Mammary epithelial cell (primary cell): ENCODE measurements at regions of chr4 and their contacts with region 1.

Region 1: DNA sequence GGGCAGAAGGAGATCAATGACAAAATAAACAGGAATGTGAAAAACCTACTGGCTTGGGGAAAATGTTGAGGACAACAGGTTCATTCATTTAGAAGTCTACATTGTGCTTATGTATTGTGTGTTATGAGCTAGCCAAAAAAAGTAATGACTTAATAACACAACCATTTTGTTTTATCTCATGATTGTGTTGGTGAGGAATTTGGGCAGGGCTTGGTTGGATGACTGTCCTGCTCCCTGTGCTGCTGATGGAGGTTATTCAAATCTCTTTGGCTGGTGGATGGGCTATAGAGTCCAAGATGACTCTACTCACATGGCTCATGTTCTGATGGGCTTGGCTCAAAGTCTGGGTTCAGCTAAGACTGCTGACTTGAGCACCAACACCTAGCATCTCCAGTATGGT is 116.3 kb downstream of the HS3ST1 start:
- DNase-seq: peak; percentile 81
- H3K4me3 ChIP-seq: no peak overlapping the region
- H3K27ac ChIP-seq: peak overlapping the region; percentile 51
- H3K4me1 ChIP-seq: peaks cover 27% of the 10 kb centered on the region
- H3K27me3 ChIP-seq: no peaks in the 10 kb centered on the region
- CTCF ChIP-seq: no peak

Region 2: GRCh38 chr4:10063544-10064300 is 1248.7 kb before region 1 on chr4:
- CTCF ChIA-PET with region 1: no interaction called
- dilution Hi-C with region 1: no loop called
- in situ Hi-C with region 1: no loop called
- intact Hi-C with region 1: no loop called
- DNase-seq: peak; percentile 70
- H3K4me3 ChIP-seq: no peak overlapping the region
- H3K27ac ChIP-seq: no peak overlapping the region
- H3K4me1 ChIP-seq: peaks cover 9% of the 10 kb centered on the region
- H3K27me3 ChIP-seq: no peaks in the 10 kb centered on the region
- CTCF ChIP-seq: peak; percentile 95

Region 3: GRCh38 chr4:10866666-10867065 is 445.7 kb before region 1 on chr4:
- CTCF ChIA-PET with region 1: interaction called, 17 read pairs
- dilution Hi-C with region 1: no loop called
- in situ Hi-C with region 1: no loop called
- intact Hi-C with region 1: no loop called
- DNase-seq: no peak
- H3K4me3 ChIP-seq: no peak overlapping the region
- H3K27ac ChIP-seq: no peak overlapping the region
- H3K4me1 ChIP-seq: no peaks in the 10 kb centered on the region
- H3K27me3 ChIP-seq: no peaks in the 10 kb centered on the region
- CTCF ChIP-seq: no peak

Region 4: GRCh38 chr4:11281720-11282119 is 30.7 kb before region 1 on chr4:
- CTCF ChIA-PET with region 1: no interaction called
- dilution Hi-C with region 1: no loop called
- in situ Hi-C with region 1: no loop called
- intact Hi-C with region 1: no loop called
- DNase-seq: peak; percentile 24
- H3K4me3 ChIP-seq: no peak overlapping the region
- H3K27ac ChIP-seq: no peak overlapping the region
- H3K4me1 ChIP-seq: peaks cover 7% of the 10 kb centered on the region
- H3K27me3 ChIP-seq: no peaks in the 10 kb centered on the region
- CTCF ChIP-seq: no peak

Region 5: DNA sequence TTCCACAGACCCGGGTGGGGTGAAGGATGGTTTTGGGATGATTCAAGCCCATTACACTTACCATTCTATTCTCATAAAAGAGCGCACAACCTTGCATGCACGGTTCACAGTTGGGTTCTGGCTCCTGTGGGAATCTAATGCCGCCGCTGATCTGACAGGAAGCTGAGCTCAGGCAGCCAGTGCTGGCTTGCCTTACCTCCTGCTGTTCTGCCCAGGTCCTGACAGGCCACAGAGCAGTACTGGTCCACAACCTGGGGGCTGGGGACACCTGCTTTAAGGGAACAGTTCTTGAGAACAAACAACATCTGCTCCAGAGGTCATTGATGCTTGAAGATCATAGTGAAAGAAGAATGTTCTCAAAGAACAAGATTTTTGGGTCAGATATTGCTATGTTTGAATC is 124.3 kb after region 1 on chr4:
- CTCF ChIA-PET with region 1: no interaction called
- dilution Hi-C with region 1: no loop called
- in situ Hi-C with region 1: no loop called
- intact Hi-C with region 1: no loop called
- DNase-seq: peak; percentile 63
- H3K4me3 ChIP-seq: no peak overlapping the region
- H3K27ac ChIP-seq: no peak overlapping the region
- H3K4me1 ChIP-seq: peaks cover 28% of the 10 kb centered on the region
- H3K27me3 ChIP-seq: no peaks in the 10 kb centered on the region
- CTCF ChIP-seq: no peak